BJ (cell line): ENCODE measurements at regions of chr18 and their contacts with region 1.

Region 1: GRCh38 chr18:23918401-23919032 is 96.0 kb upstream of the TTC39C start:
- DNase-seq: no peak
- H3K4me3 ChIP-seq: no peak overlapping the region
- H3K27me3 ChIP-seq: no peaks in the 10 kb centered on the region
- CTCF ChIP-seq: peak; percentile 90

Region 2: DNA sequence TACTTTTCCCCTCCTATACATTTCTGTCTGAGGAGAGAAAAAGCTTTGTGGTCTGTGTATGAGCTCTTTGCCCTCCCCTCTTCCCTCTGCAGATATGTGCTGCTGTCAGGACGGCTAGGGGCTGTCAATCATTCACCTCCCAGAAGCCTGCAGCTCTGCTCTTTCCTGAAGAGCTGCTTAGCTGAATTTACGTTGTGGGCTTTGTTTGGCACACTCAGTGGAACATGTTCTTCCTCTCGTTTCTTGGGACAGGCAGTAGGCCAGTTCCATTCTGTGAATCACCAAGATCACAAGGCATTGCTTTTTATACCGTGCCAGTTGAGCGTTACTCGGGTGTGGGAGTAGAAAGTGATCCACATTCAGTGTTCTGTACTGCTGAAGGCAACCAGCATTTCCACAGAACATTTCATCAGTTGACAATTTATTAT is 92.5 kb before region 1 on chr18:
- CTCF ChIA-PET with region 1: interaction called, 18 read pairs
- POLR2A ChIA-PET with region 1: no interaction called
- DNase-seq: peak; percentile 78
- H3K4me3 ChIP-seq: no peak overlapping the region
- H3K27me3 ChIP-seq: no peaks in the 10 kb centered on the region
- CTCF ChIP-seq: no peak

Region 3: GRCh38 chr18:23861805-23862470 is 56.6 kb before region 1 on chr18:
- CTCF ChIA-PET with region 1: interaction called, 14 read pairs
- POLR2A ChIA-PET with region 1: no interaction called
- DNase-seq: peak; percentile 95
- H3K4me3 ChIP-seq: no peak overlapping the region
- H3K27me3 ChIP-seq: no peaks in the 10 kb centered on the region
- CTCF ChIP-seq: no peak

Region 4: GRCh38 chr18:23893653-23894052 is 24.9 kb before region 1 on chr18:
- CTCF ChIA-PET with region 1: interaction called, 15 read pairs
- POLR2A ChIA-PET with region 1: no interaction called
- DNase-seq: no peak
- H3K4me3 ChIP-seq: no peak overlapping the region
- H3K27me3 ChIP-seq: no peaks in the 10 kb centered on the region
- CTCF ChIP-seq: no peak